CD4-positive, alpha-beta memory T cell (primary cell): ENCODE measurements at regions of chr4 and their contacts with region 1.

Region 1: GRCh38 chr4:91502365-91502764 is 801.4 kb upstream of the GRID2 start:
- DNase-seq: no peak
- H3K4me3 ChIP-seq: no peak overlapping the region
- H3K4me3 Mint-ChIP-seq: no peak overlapping the region
- H3K27ac ChIP-seq: no peak overlapping the region
- H3K27ac Mint-ChIP-seq: no peak overlapping the region
- H3K4me1 ChIP-seq: no peaks in the 10 kb centered on the region
- H3K4me1 Mint-ChIP-seq: peaks cover 0 to 2% (median 0%) of the 10 kb centered on the region in 4 donors
- H3K27me3 ChIP-seq: no peaks in the 10 kb centered on the region
- H3K27me3 Mint-ChIP-seq: no peaks in the 10 kb centered on the region

Region 2: GRCh38 chr4:91567594-91567993 is 65.2 kb after region 1 on chr4:
- CTCF ChIA-PET with region 1: no interaction called
- POLR2A ChIA-PET with region 1: no interaction called
- intact Hi-C with region 1: loop called (anchors 10 kb)
- DNase-seq: no peak
- H3K4me3 ChIP-seq: no peak overlapping the region
- H3K4me3 Mint-ChIP-seq: no peak overlapping the region
- H3K27ac ChIP-seq: no peak overlapping the region
- H3K27ac Mint-ChIP-seq: no peak overlapping the region
- H3K4me1 ChIP-seq: no peaks in the 10 kb centered on the region
- H3K4me1 Mint-ChIP-seq: no peaks in the 10 kb centered on the region
- H3K27me3 ChIP-seq: no peaks in the 10 kb centered on the region
- H3K27me3 Mint-ChIP-seq: no peaks in the 10 kb centered on the region